Head of caudate nucleus (tissue), 42 donors: ENCODE measurements at regions of chr6 and their contacts with region 1.

Region 1: GRCh38 chr6:30717042-30717844 is at the start of gene MDC1:
- DNase-seq: peak; percentile 96 to 100 (median 100)

Region 2: DNA sequence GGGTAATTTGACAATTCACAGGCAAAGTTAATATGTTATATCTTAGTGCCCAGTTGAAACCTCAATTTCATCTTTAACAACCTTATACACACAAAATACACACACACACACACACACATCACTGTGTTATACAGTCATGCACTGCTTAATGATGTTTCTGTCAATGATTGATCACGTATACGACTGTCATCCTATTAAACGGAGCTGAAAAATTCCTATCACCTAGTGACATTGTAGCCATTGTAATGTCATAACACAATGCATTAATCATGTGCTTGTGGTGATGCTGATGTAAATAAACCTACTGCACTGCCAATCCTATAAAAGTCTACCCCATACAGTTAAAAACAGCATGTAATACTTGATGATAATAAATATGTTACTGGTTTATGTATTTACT is 292.7 kb before region 1 on chr6:
- intact Hi-C with region 1: no loop called
- DNase-seq: no peak

Region 3: GRCh38 chr6:30603961-30604360 is 113.3 kb before region 1 on chr6:
- intact Hi-C with region 1: no loop called
- DNase-seq: no peak

Region 4: GRCh38 chr6:30616811-30617564 is 100.3 kb before region 1 on chr6 and contains the start of gene PPP1R10:
- intact Hi-C with region 1: loop called (anchors 5 kb)
- DNase-seq: peak; percentile 96 to 100 (median 99)

Region 5: GRCh38 chr6:30678964-30679726 is 38.1 kb before region 1 on chr6:
- intact Hi-C with region 1: loop called (anchors 1 kb)
- DNase-seq: peak; percentile 70 to 96 (median 91)

Region 6: GRCh38 chr6:30690403-30691207 is 26.6 kb before region 1 on chr6 and contains the start of gene NRM:
- intact Hi-C with region 1: loop called (anchors 2 kb)
- DNase-seq: peak; percentile 58 to 93 (median 86)

Region 7: DNA sequence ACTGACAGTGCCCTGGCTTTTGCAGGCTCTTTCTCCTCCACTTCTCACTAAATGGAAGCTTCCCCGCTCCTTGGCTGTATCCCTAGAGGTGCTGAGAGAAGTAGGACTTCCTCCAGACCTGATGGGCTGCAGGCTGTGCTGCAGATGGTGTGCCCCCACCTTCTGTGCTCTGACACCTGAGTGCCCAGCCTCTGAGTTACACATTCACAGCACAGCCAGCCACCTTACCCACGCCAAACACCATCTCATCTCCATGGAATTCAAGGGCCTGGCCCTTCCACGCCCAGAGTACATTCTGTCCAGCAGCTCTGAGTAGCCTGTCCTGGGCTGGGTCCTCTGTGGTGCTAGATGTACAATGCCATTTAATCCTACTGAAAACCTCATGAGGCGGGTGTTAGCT is 209.4 kb after region 1 on chr6:
- intact Hi-C with region 1: no loop called
- DNase-seq: no peak